T-cell (primary cell): ENCODE measurements at regions of chr16 and their contacts with region 1.

Region 1: DNA sequence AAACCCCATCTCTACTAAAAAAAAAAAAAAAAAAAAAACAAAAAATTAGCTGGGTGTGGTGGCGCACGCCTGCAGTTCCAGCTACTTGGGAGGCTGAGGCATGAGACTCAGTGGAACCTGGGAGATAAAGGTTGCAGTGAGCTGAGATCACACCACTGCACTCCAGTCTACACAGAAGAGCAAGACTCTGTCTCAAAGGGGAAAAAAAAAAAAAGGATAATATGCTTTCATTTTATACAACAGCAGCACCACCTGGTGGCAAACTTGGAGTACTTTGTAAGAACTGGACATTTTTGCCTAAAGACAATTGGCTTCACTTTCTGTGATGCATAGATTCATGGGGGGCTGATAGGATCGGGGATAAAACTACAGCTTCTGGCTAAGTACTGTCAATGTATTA is 8.5 kb downstream of the CHTF8 start:
- DNase-seq: peak in 33 of 35 experiments; percentile 20 to 86 (median 64)
- ATAC-seq: peak; percentile 32 to 82 (median 62)
- H3K4me3 ChIP-seq: no peak overlapping the region
- H3K4me3 Mint-ChIP-seq: no peak overlapping the region
- H3K27ac ChIP-seq: no peak overlapping the region
- H3K27ac Mint-ChIP-seq: no peak overlapping the region
- H3K4me1 ChIP-seq: peaks cover 0 to 4% of the 10 kb centered on the region in 2 experiments
- H3K4me1 Mint-ChIP-seq: peaks cover 21 to 29% (median 25%) of the 10 kb centered on the region in 3 donors
- H3K27me3 ChIP-seq: no peaks in the 10 kb centered on the region
- H3K27me3 Mint-ChIP-seq: no peaks in the 10 kb centered on the region

Region 2: GRCh38 chr16:68843482-68844210 is 280.3 kb before region 1 on chr16 and contains the start of gene TANGO6:
- CTCF ChIA-PET with region 1: interaction called in 1 of 2 experiments, 11 read pairs
- POLR2A ChIA-PET with region 1: no interaction called
- DNase-seq: peak; percentile 78 to 93 (median 86)
- ATAC-seq: peak; percentile 94 to 97 (median 95)
- H3K4me3 ChIP-seq: peak within 1 kb of the TSS; percentile 89 to 94
- H3K4me3 Mint-ChIP-seq: peak within 1 kb of the TSS; percentile 81 to 94 (median 89)
- H3K27ac ChIP-seq: peak within 1 kb of the TSS; percentile 64
- H3K27ac Mint-ChIP-seq: peak within 1 kb of the TSS; percentile 67 to 90
- H3K4me1 ChIP-seq: peaks cover 10 to 18% of the 10 kb centered on the region in 2 experiments
- H3K4me1 Mint-ChIP-seq: peaks cover 32 to 38% (median 36%) of the 10 kb centered on the region in 3 donors
- H3K27me3 ChIP-seq: peaks cover 0 to 5% of the 10 kb centered on the region in 2 experiments
- H3K27me3 Mint-ChIP-seq: no peaks in the 10 kb centered on the region
- total RNA-seq, gene TANGO6: 25.2 to 35.2 (median 29.0) TPM

Region 3: DNA sequence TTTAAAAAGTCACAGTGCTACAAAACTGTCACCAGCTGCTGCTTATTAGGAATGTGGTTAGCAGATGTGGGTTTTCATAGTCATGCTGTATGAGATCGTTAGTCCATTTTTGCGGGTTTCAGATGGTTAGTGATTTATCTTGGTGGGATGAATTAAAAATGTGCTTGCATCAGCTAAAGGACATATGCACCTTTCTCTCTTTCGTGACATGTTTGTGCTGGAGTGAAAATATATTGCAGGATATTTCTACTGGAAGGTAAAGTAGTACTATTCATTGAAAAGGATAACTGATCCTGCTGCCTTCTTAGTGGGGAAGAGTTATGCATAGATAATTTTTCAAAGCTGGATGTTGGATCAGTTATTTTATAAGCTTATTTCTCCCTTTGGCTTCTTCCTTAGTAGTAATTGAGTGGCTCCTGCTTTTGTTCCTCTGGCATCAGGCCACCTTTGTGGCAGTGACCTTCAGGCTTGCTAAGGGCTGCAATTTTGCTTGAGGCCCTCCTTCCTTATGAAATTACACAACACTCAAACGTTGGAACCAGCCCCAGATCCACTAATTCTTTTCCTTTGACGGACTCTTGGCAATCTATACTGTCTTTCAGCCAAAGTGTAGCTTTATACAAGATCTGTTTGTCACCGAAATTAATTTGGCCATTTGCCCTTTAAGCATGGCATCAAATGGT is 55.6 kb after region 1 on chr16:
- CTCF ChIA-PET with region 1: no interaction called
- POLR2A ChIA-PET with region 1: no interaction called
- DNase-seq: no peak
- ATAC-seq: no peak
- H3K4me3 ChIP-seq: no peak overlapping the region
- H3K4me3 Mint-ChIP-seq: no peak overlapping the region
- H3K27ac ChIP-seq: no peak overlapping the region
- H3K27ac Mint-ChIP-seq: no peak overlapping the region
- H3K4me1 ChIP-seq: peaks cover 0 to 4% of the 10 kb centered on the region in 2 experiments
- H3K4me1 Mint-ChIP-seq: peaks cover 0 to 3% (median under 1%) of the 10 kb centered on the region in 3 donors
- H3K27me3 ChIP-seq: no peaks in the 10 kb centered on the region
- H3K27me3 Mint-ChIP-seq: no peaks in the 10 kb centered on the region